Dorsolateral prefrontal cortex (tissue), 120 donors: ENCODE measurements at regions of chr4 and their contacts with region 1.

Region 1: GRCh38 chr4:47469951-47470350 is 6.4 kb upstream of the COMMD8 start:
- DNase-seq: no peak
- H3K4me3 ChIP-seq: no peak overlapping the region
- H3K27ac ChIP-seq: no peak overlapping the region
- H3K27me3 ChIP-seq: no peaks in the 10 kb centered on the region
- CTCF ChIP-seq: no peak

Region 2: DNA sequence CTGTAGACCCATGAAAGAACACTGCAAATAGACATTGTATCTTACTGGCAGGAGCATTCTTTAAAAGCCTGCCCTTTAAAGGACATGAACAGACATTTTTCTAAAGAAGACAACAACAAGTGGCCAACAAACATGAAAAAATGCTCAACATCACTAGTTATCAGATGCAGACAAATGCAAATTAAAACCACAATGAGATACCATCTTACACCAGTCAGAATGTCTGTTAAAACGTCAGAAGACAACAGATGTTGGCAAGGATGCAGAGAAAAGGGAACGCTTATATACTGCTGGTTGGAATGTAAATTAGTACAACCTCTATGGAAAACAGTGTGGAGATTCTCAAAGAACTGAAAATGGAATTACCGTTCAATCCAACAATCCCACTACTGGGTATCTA is 92.3 kb after region 1 on chr4:
- intact Hi-C with region 1: no loop called
- DNase-seq: no peak
- H3K4me3 ChIP-seq: no peak overlapping the region
- H3K27ac ChIP-seq: no peak overlapping the region
- H3K27me3 ChIP-seq: no peaks in the 10 kb centered on the region
- CTCF ChIP-seq: no peak

Region 3: GRCh38 chr4:47650584-47651130 is 180.7 kb after region 1 on chr4:
- intact Hi-C with region 1: loop called in 1 of 2 experiments (anchors 10 kb)
- DNase-seq: no peak
- H3K4me3 ChIP-seq: no peak overlapping the region
- H3K27ac ChIP-seq: no peak overlapping the region
- H3K27me3 ChIP-seq: no peaks in the 10 kb centered on the region
- CTCF ChIP-seq: no peak

Region 4: DNA sequence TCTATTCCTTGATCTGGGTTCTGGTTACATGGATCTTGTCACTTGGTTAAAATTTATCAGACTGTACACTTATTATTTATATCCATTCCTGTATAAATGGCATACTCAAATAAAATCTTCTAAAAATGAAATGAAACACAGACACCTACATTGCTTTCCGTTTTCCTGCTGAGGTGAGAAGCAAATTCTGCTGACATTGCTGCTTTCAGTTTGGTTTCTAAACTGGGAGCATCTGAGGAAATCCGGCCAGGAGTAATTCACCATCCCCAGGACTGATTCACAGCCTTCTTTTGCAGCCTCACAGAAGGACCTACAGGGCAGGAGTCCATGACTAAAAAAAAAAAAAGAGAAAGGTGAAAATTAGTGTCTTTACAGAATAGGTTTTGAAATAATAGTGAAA is 274.3 kb after region 1 on chr4:
- intact Hi-C with region 1: no loop called
- DNase-seq: no peak
- H3K4me3 ChIP-seq: no peak overlapping the region
- H3K27ac ChIP-seq: no peak overlapping the region
- H3K27me3 ChIP-seq: no peaks in the 10 kb centered on the region
- CTCF ChIP-seq: no peak